ENCODE measurements at regions of chr19 and their contacts with region 1.

Region 1: GRCh38 chr19:38877781-38878574 is at the start of gene RINL:
- DNase-seq: peak; percentile 41 to 78 (median 74)
- ATAC-seq: peak; percentile 94
- H3K4me3 ChIP-seq: peak within 1 kb of the TSS; percentile 60
- H3K4me3 Mint-ChIP-seq: peak within 1 kb of the TSS; percentile 58 to 98 (median 88)
- H3K27ac ChIP-seq: peak within 1 kb of the TSS; percentile 93
- H3K27ac Mint-ChIP-seq: peak within 1 kb of the TSS; percentile 95 to 99 (median 97)
- H3K4me1 ChIP-seq: peaks cover 22 to 30% of the 10 kb centered on the region in 2 donors
- H3K4me1 Mint-ChIP-seq: peaks cover 15 to 47% (median 30%) of the 10 kb centered on the region in 7 donors
- H3K27me3 ChIP-seq: no peaks in the 10 kb centered on the region
- H3K27me3 Mint-ChIP-seq: no peaks in the 10 kb centered on the region
- total RNA-seq, gene RINL: 32.8 to 75.9 (median 64.0) TPM

Region 2: DNA sequence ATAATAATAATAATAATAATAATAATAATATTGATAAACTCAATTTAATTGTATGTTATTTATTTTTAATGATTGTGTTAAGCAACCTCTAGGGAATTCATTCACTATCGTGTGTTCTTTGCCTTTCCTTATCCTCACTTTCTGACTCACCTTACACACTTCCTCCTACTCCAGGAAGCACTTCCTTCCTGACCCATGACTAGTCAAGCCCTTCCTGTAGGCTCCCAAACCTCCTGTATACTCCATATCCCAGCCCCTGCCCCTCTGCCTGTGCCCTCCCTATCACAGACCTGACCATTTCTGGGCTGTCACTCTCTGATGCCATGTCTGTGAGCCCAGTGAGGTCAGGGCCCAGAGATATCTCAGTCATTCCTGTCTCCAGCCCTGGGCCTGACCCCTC is 72.8 kb before region 1 on chr19:
- CTCF ChIA-PET with region 1: no interaction called
- POLR2A ChIA-PET with region 1: no interaction called
- intact Hi-C with region 1: no loop called
- DNase-seq: no peak
- ATAC-seq: no peak
- H3K4me3 ChIP-seq: no peak overlapping the region
- H3K4me3 Mint-ChIP-seq: peak overlapping the region in 5 of 10 donors; percentile 14 to 66 (median 50)
- H3K27ac ChIP-seq: no peak overlapping the region
- H3K27ac Mint-ChIP-seq: peak overlapping the region in 1 of 9 donors; percentile 3
- H3K4me1 ChIP-seq: no peaks in the 10 kb centered on the region
- H3K4me1 Mint-ChIP-seq: peaks cover 5 to 10% (median 8%) of the 10 kb centered on the region in 7 donors
- H3K27me3 ChIP-seq: no peaks in the 10 kb centered on the region
- H3K27me3 Mint-ChIP-seq: no peaks in the 10 kb centered on the region

Region 3: DNA sequence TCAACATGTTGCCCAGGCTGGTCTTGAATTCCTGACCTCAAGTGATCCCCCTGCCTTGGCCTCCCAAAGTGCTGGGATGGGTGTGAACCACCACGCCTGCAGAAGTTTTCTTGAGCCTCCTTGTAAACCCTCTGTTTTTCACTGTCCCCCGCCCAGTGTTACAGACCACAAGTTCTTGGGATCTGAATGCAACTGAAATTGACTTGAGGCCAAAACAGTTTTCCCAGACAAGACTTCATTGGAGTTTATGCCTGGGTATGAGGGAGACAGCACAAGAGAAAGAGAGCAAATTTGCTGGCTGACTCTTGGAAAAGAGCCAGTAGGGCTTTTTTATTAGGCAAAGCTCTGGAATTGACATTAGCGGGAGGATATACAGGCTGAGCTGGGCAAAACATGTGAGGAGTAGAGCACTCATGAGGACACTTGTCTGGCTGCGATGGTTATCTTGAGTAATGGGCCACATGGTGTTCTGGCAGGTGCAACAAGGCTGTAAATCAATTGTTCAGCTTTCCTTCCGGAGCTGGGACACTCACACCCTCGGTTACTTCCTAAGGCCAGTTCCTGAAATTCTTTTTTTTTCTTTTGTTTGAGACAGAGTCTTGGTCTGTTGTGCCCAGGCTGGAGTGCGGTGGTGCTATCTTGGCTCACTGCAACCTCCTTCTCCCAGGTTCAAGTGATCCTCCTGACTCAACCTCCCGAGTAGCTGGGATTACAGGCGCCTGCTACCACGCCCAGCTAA is 15.5 kb before region 1 on chr19:
- CTCF ChIA-PET with region 1: interaction called, 4 read pairs
- POLR2A ChIA-PET with region 1: interaction called, 13 read pairs
- intact Hi-C with region 1: no loop called
- DNase-seq: no peak
- ATAC-seq: no peak
- H3K4me3 ChIP-seq: no peak overlapping the region
- H3K4me3 Mint-ChIP-seq: no peak overlapping the region
- H3K27ac ChIP-seq: no peak overlapping the region
- H3K27ac Mint-ChIP-seq: no peak overlapping the region
- H3K4me1 ChIP-seq: peaks cover 22 to 25% of the 10 kb centered on the region in 2 donors
- H3K4me1 Mint-ChIP-seq: peaks cover 23 to 47% (median 42%) of the 10 kb centered on the region in 7 donors
- H3K27me3 ChIP-seq: no peaks in the 10 kb centered on the region
- H3K27me3 Mint-ChIP-seq: no peaks in the 10 kb centered on the region